Mammary epithelial cell (primary cell): ENCODE measurements at regions of chrX and their contacts with region 1.

Region 1: DNA sequence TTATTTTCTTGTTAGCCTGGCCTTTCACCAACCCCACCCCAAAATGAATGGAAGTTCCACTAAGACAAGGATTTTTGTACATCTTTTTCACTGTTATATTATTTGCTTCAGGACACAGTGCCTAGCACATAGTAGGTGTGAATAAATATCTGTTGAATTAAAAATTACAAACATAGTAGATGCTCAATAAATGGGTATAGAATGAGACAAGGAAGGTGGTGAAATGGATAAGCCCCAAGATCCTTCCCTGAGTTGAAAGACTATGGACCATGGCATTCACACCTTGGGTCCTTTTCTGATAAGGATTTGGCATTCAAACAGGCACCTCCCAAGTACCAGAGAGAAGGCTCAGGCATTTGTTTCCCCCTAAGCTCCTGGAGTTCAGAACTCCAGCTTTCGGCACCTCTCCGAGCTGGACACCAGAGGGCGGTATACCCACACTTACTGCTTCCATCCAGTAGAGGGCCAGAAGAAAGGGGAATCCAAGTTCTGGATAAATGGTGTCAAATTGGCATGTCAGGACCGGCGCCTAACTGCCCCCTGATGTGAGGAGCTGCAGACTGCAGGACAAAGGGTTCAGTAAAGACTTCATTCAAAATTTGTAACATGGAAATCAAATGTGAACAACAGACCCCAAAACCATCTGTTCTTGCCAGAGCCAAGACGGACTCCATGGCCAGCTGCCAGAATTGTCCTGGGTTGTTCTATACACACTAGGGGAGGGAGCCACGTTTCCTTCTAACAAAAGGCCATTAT is 193.0 kb downstream of the GPC3 start:
- DNase-seq: peak; percentile 61
- H3K4me3 ChIP-seq: peak overlapping the region in 2 of 3 experiments; percentile 19 to 23
- H3K27ac ChIP-seq: no peak overlapping the region
- H3K4me1 ChIP-seq: no peaks in the 10 kb centered on the region
- H3K27me3 ChIP-seq: peaks cover 2% of the 10 kb centered on the region
- CTCF ChIP-seq: peak; percentile 100

Region 2: GRCh38 chrX:133660281-133660680 is 132.1 kb before region 1 on chrX:
- CTCF ChIA-PET with region 1: no interaction called
- dilution Hi-C with region 1: no loop called
- in situ Hi-C with region 1: no loop called
- intact Hi-C with region 1: no loop called
- DNase-seq: peak; percentile 48
- H3K4me3 ChIP-seq: no peak overlapping the region
- H3K27ac ChIP-seq: no peak overlapping the region
- H3K4me1 ChIP-seq: no peaks in the 10 kb centered on the region
- H3K27me3 ChIP-seq: no peaks in the 10 kb centered on the region
- CTCF ChIP-seq: no peak

Region 3: DNA sequence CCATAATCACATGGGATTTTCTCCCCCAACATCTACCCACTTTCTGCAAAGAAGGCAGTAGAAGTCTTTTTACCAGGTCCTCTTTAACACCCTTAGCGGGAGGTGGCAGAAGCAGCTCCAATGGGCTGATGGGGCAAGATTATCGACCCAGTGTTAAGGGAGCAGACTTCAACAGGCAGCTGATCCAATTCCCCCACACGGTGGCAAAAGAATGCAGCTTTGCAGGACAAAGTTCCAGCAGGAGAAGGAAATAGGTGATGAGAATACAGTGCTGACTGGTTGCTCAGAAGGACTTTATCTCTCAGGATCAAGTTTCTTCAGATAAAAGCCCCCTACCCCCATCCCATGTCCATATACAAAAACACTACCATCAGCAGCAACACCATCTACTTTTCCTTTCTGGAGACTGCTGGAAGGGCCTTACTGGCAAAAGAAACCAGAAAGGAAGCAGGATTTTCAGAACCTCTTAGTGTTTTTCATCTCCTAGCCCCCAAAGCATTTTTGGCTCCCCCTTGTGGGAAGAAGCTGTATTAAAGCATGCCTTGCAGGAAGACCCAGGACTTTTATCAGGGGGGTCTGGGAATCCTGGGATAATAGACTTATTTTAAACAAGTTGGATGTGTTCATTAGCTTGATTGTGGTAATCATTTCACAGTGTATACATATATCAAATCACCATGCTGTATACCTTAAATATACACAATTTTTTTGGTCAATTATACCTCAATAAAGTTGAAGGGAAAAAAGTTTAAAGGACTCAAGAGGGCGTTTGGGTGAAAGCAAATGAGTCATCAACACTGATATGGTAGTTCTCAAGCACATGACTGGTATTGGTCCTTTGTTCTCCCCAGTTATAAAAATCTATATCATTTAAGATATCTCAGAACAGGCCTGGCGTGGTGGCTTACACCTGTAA is 46.6 kb after region 1 on chrX:
- CTCF ChIA-PET with region 1: interaction called, 6 read pairs
- dilution Hi-C with region 1: no loop called
- in situ Hi-C with region 1: no loop called
- intact Hi-C with region 1: loop called (anchors 1 kb)
- DNase-seq: peak; percentile 10
- H3K4me3 ChIP-seq: no peak overlapping the region
- H3K27ac ChIP-seq: no peak overlapping the region
- H3K4me1 ChIP-seq: no peaks in the 10 kb centered on the region
- H3K27me3 ChIP-seq: peaks cover 3% of the 10 kb centered on the region
- CTCF ChIP-seq: peak; percentile 68

Region 4: DNA sequence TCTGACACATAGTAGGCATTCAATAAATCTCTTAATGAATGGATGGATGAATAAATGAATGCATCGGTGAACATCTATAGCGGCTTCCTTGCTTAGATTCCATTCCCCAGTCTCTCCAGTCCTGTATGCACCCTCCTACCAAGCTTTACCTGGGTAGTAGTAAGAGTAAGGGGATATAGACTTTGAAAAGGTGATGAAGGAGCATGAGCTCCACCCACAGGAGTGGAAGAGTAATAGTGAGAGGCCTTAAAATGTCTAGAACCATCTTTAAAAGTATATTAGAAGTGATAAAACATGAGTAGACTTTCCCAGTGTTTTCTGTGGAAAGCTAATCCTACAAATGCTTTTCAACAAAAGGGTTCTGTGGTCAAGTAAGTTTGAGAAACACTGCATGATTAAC is 228.5 kb after region 1 on chrX:
- CTCF ChIA-PET with region 1: no interaction called
- dilution Hi-C with region 1: no loop called
- in situ Hi-C with region 1: no loop called
- intact Hi-C with region 1: loop called (anchors 1 kb)
- DNase-seq: no peak
- H3K4me3 ChIP-seq: no peak overlapping the region
- H3K27ac ChIP-seq: no peak overlapping the region
- H3K4me1 ChIP-seq: no peaks in the 10 kb centered on the region
- H3K27me3 ChIP-seq: no peaks in the 10 kb centered on the region
- CTCF ChIP-seq: peak in 1 of 2 donors; percentile 29

Region 5: DNA sequence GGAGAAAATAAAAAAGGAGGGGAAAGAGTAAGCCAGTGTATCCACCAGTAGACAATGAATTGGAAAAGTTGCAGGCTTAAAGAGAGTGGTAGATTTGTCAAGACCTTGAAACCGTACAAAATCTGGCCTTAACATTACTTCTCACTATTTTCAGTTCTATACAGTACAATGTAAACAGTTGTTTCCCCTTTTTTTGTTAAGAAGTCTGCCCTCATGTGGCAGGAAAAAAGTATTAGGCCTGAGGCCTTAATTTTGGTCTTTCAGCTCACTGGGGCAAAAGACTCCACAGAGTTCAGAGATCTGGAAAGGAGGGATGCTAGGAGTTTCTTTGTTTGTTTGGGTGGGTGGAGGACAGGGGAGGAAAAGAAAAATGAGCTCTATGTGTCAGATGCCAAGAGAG is 351.9 kb after region 1 on chrX:
- CTCF ChIA-PET with region 1: no interaction called
- dilution Hi-C with region 1: no loop called
- in situ Hi-C with region 1: no loop called
- intact Hi-C with region 1: loop called (anchors 1 kb)
- DNase-seq: peak; percentile 1
- H3K4me3 ChIP-seq: no peak overlapping the region
- H3K27ac ChIP-seq: no peak overlapping the region
- H3K4me1 ChIP-seq: no peaks in the 10 kb centered on the region
- H3K27me3 ChIP-seq: no peaks in the 10 kb centered on the region
- CTCF ChIP-seq: peak; percentile 7 to 46